ENCODE measurements at regions of chr11 and their contacts with region 1.

Region 1: DNA sequence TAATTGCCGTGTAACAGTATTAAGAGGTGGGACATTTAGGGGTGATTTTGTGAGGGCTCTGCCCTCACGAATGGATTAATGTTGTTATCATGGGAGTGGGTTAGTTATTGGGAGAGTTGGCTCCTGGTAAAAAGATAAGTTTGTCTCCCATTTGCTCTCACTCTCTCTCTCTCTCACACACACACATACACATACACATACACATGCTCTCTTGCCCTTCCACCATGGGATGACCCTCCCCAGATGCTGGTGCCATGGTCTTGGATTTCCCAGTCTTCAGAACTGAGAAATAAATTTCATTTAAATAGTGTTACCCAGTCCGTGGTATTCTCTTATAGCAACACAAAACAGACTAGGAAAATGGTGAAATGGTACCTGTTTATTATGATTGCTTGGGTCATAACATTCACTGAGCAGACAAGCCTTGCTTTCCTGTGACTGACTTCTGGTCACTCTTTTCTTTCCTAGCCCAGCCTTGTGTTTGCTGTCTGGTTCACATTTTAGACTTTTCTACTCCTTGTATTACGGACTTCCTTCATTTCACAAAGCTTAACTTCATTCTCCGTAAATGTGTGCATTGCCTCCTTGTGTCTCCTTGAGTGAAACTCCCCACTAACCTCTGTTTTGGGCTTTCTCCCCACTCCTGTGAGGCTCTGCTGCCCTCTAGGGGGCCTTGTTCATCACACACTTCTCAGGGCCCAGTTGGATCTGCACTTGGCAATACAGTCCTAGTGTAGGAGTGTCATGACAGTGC is 206.5 kb upstream of the CTSC start:
- DNase-seq: peak; percentile 86 to 92 (median 89)
- H3K4me3 ChIP-seq: no peak overlapping the region
- H3K27ac ChIP-seq: no peak overlapping the region
- H3K4me1 ChIP-seq: peaks cover 0 to 5% (median 3%) of the 10 kb centered on the region in 4 experiments
- H3K27me3 ChIP-seq: no peaks in the 10 kb centered on the region

Region 2: DNA sequence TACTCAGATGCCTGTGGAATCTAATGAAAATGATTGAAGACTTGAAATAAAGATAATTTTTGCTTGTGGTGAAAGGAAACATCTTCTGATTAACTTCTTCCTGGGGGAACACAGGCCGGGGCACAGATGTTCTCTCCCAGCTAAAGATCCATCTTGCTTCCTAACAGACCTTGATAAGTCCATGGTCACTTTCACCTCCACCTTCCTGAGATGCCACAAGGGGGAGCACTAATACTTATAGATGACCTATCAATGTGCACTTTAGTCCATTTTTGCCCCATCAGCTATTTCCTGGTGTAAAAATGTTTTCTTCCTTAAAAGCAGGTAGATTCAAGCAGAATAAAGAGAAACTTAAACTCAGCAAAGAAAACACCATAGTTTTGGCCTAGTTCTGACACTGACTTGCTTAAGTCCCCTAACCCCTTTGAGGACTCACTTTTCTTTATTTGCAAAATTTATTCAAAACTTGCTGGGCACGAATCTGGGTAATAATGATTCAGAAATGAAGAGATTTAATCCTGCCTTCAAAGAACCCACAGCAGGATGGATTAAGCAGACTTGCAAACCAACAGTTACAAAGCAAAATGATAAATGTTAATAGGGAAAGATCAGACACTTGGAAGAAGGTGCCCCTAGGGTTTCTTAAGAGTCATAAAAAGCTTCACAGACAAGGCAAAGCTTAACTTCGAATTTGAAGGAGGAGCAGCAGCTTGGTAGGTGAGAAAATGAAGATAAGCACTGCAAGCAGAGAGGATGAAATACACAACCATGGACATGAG is 527.5 kb before region 1 on chr11:
- CTCF ChIA-PET with region 1: interaction called, 38 read pairs
- POLR2A ChIA-PET with region 1: no interaction called
- DNase-seq: peak; percentile 70 to 82 (median 79)
- H3K4me3 ChIP-seq: no peak overlapping the region
- H3K27ac ChIP-seq: no peak overlapping the region
- H3K4me1 ChIP-seq: no peaks in the 10 kb centered on the region
- H3K27me3 ChIP-seq: no peaks in the 10 kb centered on the region

Region 3: GRCh38 chr11:88103337-88104206 is 440.5 kb before region 1 on chr11:
- CTCF ChIA-PET with region 1: interaction called, 39 read pairs
- POLR2A ChIA-PET with region 1: no interaction called
- DNase-seq: peak; percentile 76 to 88 (median 86)
- H3K4me3 ChIP-seq: no peak overlapping the region
- H3K27ac ChIP-seq: no peak overlapping the region
- H3K4me1 ChIP-seq: no peaks in the 10 kb centered on the region
- H3K27me3 ChIP-seq: peaks cover 0 to 2% (median 0%) of the 10 kb centered on the region in 5 experiments

Region 4: GRCh38 chr11:88231894-88232482 is 312.1 kb before region 1 on chr11:
- CTCF ChIA-PET with region 1: interaction called, 26 read pairs
- POLR2A ChIA-PET with region 1: no interaction called
- DNase-seq: peak; percentile 27 to 48 (median 46)
- H3K4me3 ChIP-seq: no peak overlapping the region
- H3K27ac ChIP-seq: no peak overlapping the region
- H3K4me1 ChIP-seq: no peaks in the 10 kb centered on the region
- H3K27me3 ChIP-seq: no peaks in the 10 kb centered on the region

Region 5: DNA sequence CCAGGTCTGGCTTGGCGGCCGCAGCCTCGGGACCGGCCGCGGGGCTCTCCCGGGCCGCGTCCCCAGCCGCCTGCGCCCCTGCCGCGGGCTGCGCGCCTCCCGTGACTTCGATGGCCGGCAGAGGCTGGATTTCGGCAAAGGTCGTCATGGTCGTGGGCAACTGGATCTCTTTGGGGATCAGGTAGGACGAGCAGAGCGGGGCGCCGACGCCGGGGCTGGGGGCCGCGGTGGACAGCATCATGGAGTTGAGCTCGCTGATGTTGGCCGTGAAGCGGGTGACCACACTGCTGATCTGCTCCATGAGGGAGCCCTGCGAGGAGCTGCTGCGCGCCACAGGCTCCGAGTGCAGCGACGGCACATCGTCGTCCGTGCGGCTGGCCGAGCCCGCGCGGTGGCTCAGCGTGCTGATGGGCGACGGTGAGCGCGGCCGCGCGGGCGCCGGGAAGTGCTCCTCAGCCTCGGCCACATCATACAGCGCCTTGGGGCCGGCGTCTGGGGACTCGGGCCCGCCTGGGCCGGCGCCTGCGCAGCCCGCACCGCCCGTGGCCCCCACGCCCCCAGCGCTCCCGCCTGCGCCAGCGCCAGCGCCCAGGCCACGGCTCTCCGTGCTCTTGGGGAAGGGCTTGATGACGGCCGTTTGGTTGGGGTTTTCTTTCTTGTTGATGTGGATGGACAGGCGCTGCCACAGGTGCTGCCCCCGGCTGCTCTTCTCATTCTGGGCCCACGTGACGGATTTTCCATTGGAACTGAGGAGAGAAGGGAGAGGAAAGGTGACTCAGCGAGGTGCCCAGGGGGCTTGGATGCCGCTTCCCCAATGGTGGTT is 35.1 kb before region 1 on chr11:
- CTCF ChIA-PET with region 1: no interaction called
- POLR2A ChIA-PET with region 1: no interaction called
- DNase-seq: peak; percentile 10 to 54 (median 34)
- H3K4me3 ChIP-seq: peak overlapping the region; percentile 15 to 66 (median 55)
- H3K27ac ChIP-seq: no peak overlapping the region
- H3K4me1 ChIP-seq: peaks cover 0 to 14% (median 13%) of the 10 kb centered on the region in 4 experiments
- H3K27me3 ChIP-seq: peaks cover 13 to 56% (median 31%) of the 10 kb centered on the region in 5 experiments

Measured in common myeloid progenitor, CD34-positive (primary cell).